ENCODE measurements at regions of chr4 and their contacts with region 1.

Region 1: DNA sequence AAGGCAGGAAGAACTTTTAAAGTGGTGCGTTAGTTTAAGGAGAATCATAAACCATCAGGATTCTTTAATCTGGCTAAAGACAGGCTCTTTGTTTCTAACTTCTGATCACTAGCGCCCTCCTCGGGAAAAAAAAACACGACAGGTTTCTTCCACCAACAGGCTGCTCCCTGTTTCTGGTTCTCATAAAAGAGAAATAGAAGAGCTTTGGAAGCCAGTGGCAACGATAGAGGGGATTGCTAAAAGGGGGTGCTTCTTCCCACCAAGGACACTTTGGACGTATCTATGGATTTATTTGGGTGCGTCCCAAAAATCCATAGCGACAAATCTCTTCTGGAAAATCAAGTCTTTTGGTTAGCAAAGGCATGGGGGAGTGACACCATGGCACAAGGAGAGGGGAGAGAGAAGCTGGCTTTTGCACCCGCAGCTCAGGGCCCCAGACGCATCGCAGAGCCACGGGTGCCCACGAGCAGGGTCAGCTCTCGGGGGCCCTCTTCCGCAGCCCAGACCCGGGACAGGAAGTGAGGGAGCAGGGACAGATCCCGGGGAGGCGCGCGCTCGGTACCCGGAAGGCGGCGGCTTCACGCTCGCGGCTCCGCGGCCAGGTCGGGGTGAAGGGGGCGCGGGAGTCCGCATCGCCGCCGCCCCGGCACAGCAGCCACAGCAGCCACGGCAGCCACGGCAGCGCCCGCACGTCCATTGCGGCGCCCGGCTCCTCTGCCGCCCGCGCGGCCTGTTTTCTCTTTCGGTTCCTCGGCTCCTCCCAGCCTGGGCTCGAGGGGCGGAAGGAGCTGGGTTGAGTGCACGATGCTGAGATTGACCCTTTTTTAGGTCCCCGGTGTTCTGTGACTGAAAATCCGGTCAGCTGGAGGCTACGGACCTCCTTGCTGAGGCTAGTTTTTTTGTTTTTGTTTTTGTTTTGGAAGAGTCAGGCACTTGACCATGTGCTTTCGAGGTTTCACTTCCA is at the start of gene CTSO:
- DNase-seq: peak; percentile 86
- H3K4me3 ChIP-seq: peak within 1 kb of the TSS; percentile 80
- H3K27ac ChIP-seq: peak within 1 kb of the TSS; percentile 94
- H3K4me1 ChIP-seq: peaks cover 4% of the 10 kb centered on the region
- H3K27me3 ChIP-seq: no peaks in the 10 kb centered on the region
- CTCF ChIP-seq: peak; percentile 80
- total RNA-seq, gene CTSO: 1.4 and 1.9 TPM in 2 replicates

Region 2: DNA sequence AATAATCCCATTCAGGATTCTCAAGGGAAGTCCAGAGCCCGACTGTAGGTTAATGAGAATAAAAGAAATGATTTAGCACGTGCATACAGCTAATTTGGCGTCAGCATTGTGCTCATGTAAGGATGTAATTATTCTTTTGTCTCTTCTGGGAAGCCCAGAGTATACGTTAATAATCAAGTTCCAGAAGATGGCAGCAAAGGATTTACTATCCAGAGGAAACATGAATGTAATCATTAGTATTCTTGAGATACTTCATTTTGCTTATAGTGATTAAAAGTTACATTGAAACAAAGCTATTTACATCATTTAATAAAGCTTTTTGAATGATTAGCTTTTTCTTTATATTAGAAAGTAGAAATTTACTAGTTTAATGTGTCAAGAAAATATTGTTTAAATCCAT is 549.5 kb before region 1 on chr4:
- CTCF ChIA-PET with region 1: no interaction called
- POLR2A ChIA-PET with region 1: no interaction called
- intact Hi-C with region 1: loop called (anchors 5 kb)
- DNase-seq: peak; percentile 64
- H3K4me3 ChIP-seq: no peak overlapping the region
- H3K27ac ChIP-seq: no peak overlapping the region
- H3K4me1 ChIP-seq: no peaks in the 10 kb centered on the region
- H3K27me3 ChIP-seq: no peaks in the 10 kb centered on the region
- CTCF ChIP-seq: peak; percentile 50

Region 3: GRCh38 chr4:155809835-155810234 is 143.6 kb before region 1 on chr4:
- CTCF ChIA-PET with region 1: interaction called, 16 read pairs
- POLR2A ChIA-PET with region 1: no interaction called
- intact Hi-C with region 1: loop called (anchors 1 kb)
- DNase-seq: peak; percentile 90
- H3K4me3 ChIP-seq: no peak overlapping the region
- H3K27ac ChIP-seq: no peak overlapping the region
- H3K4me1 ChIP-seq: no peaks in the 10 kb centered on the region
- H3K27me3 ChIP-seq: no peaks in the 10 kb centered on the region
- CTCF ChIP-seq: peak; percentile 74